ENCODE measurements at regions of chr6 and their contacts with region 1.

Region 1: GRCh38 chr6:5260661-5261544 is at the starts of genes FARS2 and LYRM4:
- DNase-seq: peak; percentile 86 to 96 (median 89)
- ATAC-seq: peak; percentile 75
- H3K4me3 ChIP-seq: peak within 1 kb of the TSS; percentile 86
- H3K4me3 Mint-ChIP-seq: peak within 1 kb of the TSS; percentile 98
- H3K27ac ChIP-seq: peak within 1 kb of the TSS; percentile 98
- H3K27ac Mint-ChIP-seq: peak within 1 kb of the TSS; percentile 100
- H3K4me1 ChIP-seq: peaks cover 13% of the 10 kb centered on the region
- H3K4me1 Mint-ChIP-seq: peaks cover 38% of the 10 kb centered on the region
- H3K27me3 ChIP-seq: no peaks in the 10 kb centered on the region
- H3K27me3 Mint-ChIP-seq: no peaks in the 10 kb centered on the region
- CTCF ChIP-seq: no peak
- total RNA-seq, gene FARS2: 12.6 to 12.8 TPM
- total RNA-seq, gene LYRM4: 24.8 to 28.1 TPM

Region 2: DNA sequence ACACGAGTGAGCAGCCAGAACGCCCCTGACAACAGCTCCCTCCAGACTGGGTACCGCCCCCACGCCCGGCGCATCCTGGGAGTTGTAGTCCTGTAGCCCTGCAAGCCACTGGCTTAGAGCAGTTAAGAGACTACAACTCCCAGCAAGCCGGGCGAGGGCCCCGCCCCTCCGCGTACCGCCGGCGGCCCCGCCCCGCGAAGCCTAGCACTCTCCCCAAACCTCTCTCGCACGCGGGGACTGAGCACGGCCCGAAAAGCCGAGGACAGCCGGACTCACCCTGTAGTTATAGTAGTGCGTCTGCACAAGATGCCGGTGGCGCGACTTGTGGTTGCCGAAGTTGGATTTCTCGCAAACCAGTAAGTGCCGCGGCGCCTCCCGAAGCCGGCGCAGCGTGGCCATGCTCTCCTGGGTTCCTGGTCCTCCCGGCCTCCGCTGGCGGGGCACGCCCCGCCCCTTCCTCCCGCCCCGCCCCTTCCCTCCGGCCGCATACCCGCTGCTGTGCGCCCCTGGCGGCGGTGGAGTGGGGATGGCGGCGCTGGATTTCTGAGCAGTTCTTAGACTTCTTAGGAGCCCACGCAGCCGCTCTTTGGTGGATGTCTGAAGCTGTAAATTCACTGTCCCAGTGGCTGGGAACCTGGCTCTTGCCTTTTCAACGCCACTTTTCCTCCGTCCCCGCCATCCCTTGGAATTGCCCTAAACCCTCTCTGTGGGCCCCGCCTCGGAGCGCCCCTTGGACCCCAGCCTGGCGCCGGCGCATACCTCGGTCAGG is 257.1 kb before region 1 on chr6 and contains the start of gene RPP40:
- CTCF ChIA-PET with region 1: no interaction called
- POLR2A ChIA-PET with region 1: interaction called, 8 read pairs
- intact Hi-C with region 1: loop called in 1 of 2 experiments (anchors 1 kb)
- DNase-seq: peak; percentile 95 to 100 (median 98)
- ATAC-seq: peak; percentile 92
- H3K4me3 ChIP-seq: peak within 1 kb of the TSS; percentile 81
- H3K4me3 Mint-ChIP-seq: peak within 1 kb of the TSS; percentile 90
- H3K27ac ChIP-seq: peak within 1 kb of the TSS; percentile 83
- H3K27ac Mint-ChIP-seq: peak within 1 kb of the TSS; percentile 91
- H3K4me1 ChIP-seq: peaks cover 15% of the 10 kb centered on the region
- H3K4me1 Mint-ChIP-seq: peaks cover 17% of the 10 kb centered on the region
- H3K27me3 ChIP-seq: no peaks in the 10 kb centered on the region
- H3K27me3 Mint-ChIP-seq: no peaks in the 10 kb centered on the region
- CTCF ChIP-seq: peak; percentile 77
- total RNA-seq, gene RPP40: 0.36 to 0.69 TPM

Region 3: DNA sequence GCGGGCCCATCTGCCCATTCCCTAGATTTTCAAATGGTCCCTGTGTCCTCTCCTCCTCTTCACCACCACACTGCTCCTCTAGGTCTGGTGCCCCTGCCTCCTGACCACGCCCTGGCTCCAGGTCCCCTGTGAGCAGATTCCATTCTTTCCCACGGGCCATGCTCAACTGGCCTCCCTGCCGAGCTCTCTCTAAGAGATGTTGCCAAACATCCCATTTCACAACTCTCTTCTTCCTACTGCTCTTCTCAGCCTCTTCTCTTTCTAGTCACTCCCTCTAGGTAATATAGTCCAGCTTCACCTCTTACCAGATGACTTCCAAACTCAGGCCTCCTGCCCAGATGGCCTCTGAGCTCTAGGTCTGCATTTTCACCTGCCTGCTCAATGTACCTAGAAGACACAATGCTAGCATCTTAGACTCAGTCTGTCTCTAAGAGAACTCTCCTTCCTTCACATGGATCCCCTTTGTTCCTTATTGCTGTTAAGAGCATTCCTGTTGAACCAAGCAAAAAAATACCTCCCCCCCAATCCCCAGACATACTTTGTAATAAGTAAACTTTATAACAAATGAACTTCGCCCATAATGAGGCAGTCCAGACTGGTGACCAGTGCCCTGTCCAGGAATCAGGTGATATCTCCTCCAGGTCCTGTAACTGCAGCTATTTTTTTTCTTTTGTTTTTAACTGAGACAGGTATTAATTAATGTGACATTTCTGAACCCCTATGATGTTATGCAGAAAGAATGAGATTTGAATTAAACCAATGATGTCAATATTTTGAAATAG is 79.2 kb before region 1 on chr6:
- CTCF ChIA-PET with region 1: no interaction called
- POLR2A ChIA-PET with region 1: interaction called, 74 read pairs
- intact Hi-C with region 1: loop called in 1 of 2 experiments (anchors 5 kb)
- DNase-seq: no peak
- ATAC-seq: no peak
- H3K4me3 ChIP-seq: no peak overlapping the region
- H3K4me3 Mint-ChIP-seq: no peak overlapping the region
- H3K27ac ChIP-seq: no peak overlapping the region
- H3K27ac Mint-ChIP-seq: no peak overlapping the region
- H3K4me1 ChIP-seq: no peaks in the 10 kb centered on the region
- H3K4me1 Mint-ChIP-seq: peaks cover 44% of the 10 kb centered on the region
- H3K27me3 ChIP-seq: no peaks in the 10 kb centered on the region
- H3K27me3 Mint-ChIP-seq: no peaks in the 10 kb centered on the region
- CTCF ChIP-seq: no peak

Region 4: GRCh38 chr6:5995949-5996713 is 735.2 kb after region 1 on chr6:
- CTCF ChIA-PET with region 1: no interaction called
- POLR2A ChIA-PET with region 1: no interaction called
- intact Hi-C with region 1: loop called in 1 of 2 experiments (anchors 5 kb)
- DNase-seq: peak in 2 of 14 experiments; percentile 30 to 32
- ATAC-seq: no peak
- H3K4me3 ChIP-seq: peak overlapping the region; percentile 56
- H3K4me3 Mint-ChIP-seq: peak overlapping the region; percentile 96
- H3K27ac ChIP-seq: no peak overlapping the region
- H3K27ac Mint-ChIP-seq: no peak overlapping the region
- H3K4me1 ChIP-seq: peaks cover 59% of the 10 kb centered on the region
- H3K4me1 Mint-ChIP-seq: peaks cover 72% of the 10 kb centered on the region
- H3K27me3 ChIP-seq: peaks cover 85 to 94% of the 10 kb centered on the region in 2 experiments
- H3K27me3 Mint-ChIP-seq: peaks cover 98% of the 10 kb centered on the region
- CTCF ChIP-seq: no peak

Measured in CD4-positive, alpha-beta T cell (primary cell).